GM10248 (cell line): ENCODE measurements at regions of chr5 and their contacts with region 1.

Region 1: DNA sequence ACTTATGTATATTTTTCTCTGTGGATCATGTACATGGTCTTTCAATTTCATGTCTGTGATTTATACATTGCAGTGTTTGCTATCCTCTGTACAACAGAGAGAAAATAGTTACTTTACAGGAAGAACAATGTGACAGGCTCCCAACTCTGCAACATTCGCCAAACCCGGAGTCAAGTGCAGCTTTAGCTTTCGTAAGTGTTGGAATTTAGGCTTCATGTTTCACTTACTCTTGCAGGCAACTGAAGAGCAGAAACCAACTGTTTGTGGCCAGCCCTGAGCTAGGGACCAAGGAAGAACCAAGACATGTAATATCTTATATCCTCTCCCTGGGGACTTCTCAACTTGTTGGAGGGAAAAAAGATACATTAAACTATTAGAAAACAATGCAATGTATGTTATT is 147.9 kb downstream of the C5orf15 start:
- DNase-seq: no peak
- CTCF ChIP-seq: no peak

Region 2: DNA sequence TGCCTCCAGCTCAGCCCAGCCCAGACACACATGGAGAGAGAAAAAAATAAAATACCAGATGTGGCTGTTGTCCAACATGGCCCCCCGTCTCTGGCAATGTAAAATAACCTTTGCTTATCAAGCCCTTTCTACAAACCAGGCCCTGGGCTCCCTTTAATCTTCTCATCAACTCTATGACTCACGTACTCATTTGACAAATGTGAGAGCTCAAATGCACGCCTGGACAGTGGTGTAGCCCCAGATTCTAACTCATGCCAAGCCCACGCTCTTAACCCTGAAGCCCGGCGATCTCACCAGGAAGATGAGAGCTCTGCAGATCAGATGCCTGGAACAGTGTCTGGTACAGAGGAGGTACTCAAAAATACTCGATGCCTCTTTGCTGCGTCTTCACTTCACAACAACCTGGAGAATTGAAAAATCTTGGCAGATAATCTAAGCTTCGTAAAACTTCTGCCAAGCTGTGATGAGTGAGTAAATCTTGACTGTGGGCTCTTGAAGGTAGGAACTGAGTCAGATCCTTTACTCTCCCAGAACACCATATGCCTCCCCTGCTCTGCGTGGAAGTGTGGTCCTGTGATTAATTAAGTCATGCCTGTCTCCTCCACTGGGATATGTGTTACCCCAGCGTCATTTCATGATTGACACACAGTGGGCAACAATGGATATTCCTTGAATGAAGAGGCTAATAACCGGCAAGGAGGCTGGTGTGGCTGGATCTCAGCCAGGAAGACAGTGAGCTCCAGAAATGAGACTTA is 106.2 kb before region 1 on chr5:
- CTCF ChIA-PET with region 1: no interaction called
- POLR2A ChIA-PET with region 1: no interaction called
- DNase-seq: no peak
- CTCF ChIP-seq: no peak

Region 3: GRCh38 chr5:133831491-133832224 is 11.2 kb after region 1 on chr5:
- CTCF ChIA-PET with region 1: interaction called, 13 read pairs
- POLR2A ChIA-PET with region 1: no interaction called
- DNase-seq: no peak
- CTCF ChIP-seq: no peak